ENCODE measurements at regions of chr1 and their contacts with region 1.

Region 1: DNA sequence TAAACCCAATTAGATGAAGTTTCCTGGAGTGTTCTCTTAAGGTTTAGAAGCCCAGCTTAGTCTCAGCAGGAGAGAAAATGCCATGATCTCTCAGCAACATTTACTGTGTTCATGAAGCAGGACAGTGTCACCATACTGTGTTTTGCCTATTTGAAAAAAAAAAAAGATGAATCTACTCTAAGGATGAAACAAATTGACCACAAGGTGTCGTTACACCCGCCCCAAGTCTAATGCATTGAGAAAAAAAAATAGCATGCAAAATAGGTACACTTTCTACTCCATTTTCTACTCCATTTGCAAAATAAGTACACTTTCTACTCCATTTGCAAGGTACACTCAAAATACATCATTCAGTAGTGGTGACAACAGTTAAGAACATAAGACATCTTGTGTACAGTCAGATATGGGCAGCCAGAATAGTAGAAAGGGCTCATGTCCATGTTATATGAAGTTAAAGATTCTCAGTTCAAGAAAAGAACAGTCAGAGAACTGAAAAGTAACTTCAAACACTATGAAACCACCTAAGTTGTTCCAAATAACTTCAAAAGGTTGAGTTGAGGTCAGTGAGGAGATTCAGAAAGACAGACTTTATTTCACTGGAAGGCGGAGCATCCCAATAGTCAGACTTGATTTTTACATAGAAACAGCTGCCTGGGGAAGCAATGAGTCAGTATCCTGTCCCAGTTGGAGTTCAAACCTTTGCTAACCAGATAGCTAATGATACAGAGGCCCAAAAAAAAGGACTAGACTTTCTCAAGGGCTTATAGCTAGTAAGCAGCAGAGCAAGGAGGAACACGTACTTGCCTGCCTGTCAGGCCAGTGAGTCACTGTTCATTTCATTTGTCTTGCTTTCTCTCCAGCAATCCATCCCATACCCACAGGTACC is 13.3 kb downstream of the PLPPR5 start:
- DNase-seq: no peak
- H3K4me3 ChIP-seq: no peak overlapping the region
- H3K27ac ChIP-seq: no peak overlapping the region
- H3K4me1 ChIP-seq: peaks cover 0 to 6% (median 2%) of the 10 kb centered on the region in 4 experiments; a peak in 2 of 7 replicates
- H3K27me3 ChIP-seq: no peaks in the 10 kb centered on the region
- CTCF ChIP-seq: peak in 1 of 3 experiments; percentile 47; a peak in 2 of 4 replicates
- EP300 ChIP-seq: no peak
- POLR2A ChIP-seq: no peak
- RAD21 ChIP-seq: peak; percentile 30 to 37

Region 2: DNA sequence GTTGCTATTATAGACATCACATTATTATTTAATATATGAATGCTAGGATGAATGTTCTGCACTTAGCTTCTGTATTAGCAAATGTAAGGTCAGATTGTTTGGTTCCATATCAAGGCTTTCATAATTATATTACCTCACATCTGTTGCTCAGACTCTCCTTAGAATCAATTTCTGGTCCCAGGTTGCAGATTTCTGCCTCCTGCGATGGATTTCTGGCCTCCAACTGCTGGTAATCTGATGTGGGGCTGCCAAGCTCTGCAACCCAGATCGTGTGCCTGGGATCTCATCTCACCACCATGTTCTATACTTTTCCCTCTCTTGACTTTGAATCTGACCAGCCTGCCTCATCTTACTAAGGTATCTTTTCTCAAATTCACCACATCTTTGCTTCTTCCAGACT is 11.9 kb before region 1 on chr1:
- CTCF ChIA-PET with region 1: interaction called, 17 read pairs
- POLR2A ChIA-PET with region 1: no interaction called
- DNase-seq: no peak
- H3K4me3 ChIP-seq: no peak overlapping the region
- H3K27ac ChIP-seq: no peak overlapping the region
- H3K4me1 ChIP-seq: peaks cover 0 to 4% (median under 1%) of the 10 kb centered on the region in 4 experiments; a peak in 1 of 7 replicates
- H3K27me3 ChIP-seq: no peaks in the 10 kb centered on the region
- CTCF ChIP-seq: no peak
- EP300 ChIP-seq: no peak
- POLR2A ChIP-seq: no peak
- RAD21 ChIP-seq: no peak

Region 3: DNA sequence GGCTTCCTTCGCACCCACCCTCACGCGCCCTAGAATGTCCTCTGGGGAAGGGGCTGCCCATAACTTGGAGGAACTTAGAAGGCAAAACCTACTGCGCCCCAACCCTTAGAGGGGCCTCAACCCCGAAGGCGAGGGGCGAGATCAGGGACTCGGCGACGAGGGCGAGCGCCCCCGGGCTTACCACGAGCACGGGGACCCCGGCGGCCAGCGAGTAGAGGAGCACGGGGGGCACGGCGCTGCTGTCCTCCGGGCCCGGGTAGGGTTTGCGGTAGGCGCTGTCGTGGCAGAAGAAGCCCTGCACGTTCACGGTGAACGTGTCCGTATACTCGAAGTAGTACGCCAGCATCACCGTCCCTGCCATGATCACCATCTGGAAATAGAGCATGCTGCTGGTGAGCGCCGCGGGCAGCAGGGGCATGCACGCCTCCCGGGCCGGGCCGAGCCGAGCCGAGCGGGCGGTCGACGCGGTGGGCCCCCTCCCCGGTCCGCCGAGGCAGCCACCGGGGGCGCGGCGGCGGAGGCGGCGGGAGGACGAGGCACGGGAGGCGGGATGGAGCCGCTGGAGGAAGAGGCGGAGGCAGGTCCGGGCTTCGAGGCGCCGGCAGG is 13.0 kb after region 1 on chr1:
- CTCF ChIA-PET with region 1: interaction called, 22 read pairs
- POLR2A ChIA-PET with region 1: no interaction called
- DNase-seq: peak in 1 of 2 experiments; percentile 75
- H3K4me3 ChIP-seq: peak overlapping the region; percentile 53 to 85 (median 76)
- H3K27ac ChIP-seq: no peak overlapping the region
- H3K4me1 ChIP-seq: peaks cover 0 to 3% (median 2%) of the 10 kb centered on the region in 4 experiments; a peak in 5 of 7 replicates
- H3K27me3 ChIP-seq: peaks cover 0 to 8% (median 2%) of the 10 kb centered on the region in 4 experiments; a peak in 4 of 7 replicates
- CTCF ChIP-seq: no peak
- EP300 ChIP-seq: no peak
- POLR2A ChIP-seq: no peak
- RAD21 ChIP-seq: no peak

Region 4: DNA sequence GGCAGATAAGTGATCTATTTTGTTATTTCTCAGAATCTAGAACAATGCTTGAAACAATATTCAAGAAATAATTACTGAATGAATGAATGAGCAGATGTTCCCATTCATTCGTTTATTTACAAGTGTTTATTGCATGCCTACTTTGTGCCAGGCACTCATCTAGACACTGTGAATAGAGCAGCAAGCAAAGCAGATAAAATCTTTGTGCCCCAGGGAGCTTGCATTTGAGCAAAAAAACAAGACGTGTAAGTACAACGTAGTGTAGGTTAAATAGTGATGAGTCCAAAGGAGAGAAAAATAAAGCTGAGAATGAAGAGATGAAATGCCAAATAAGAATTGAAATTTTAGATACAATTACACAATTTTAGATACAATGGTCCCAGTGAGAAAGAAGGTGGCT is 37.1 kb after region 1 on chr1:
- CTCF ChIA-PET with region 1: no interaction called
- POLR2A ChIA-PET with region 1: no interaction called
- DNase-seq: no peak
- H3K4me3 ChIP-seq: no peak overlapping the region
- H3K27ac ChIP-seq: no peak overlapping the region
- H3K4me1 ChIP-seq: no peaks in the 10 kb centered on the region
- H3K27me3 ChIP-seq: peaks cover 0 to 1% (median 0%) of the 10 kb centered on the region in 4 experiments; a peak in 1 of 7 replicates
- CTCF ChIP-seq: no peak
- EP300 ChIP-seq: no peak
- POLR2A ChIP-seq: no peak
- RAD21 ChIP-seq: no peak